ENCODE measurements at regions of chr14 and their contacts with region 1.

Region 1: DNA sequence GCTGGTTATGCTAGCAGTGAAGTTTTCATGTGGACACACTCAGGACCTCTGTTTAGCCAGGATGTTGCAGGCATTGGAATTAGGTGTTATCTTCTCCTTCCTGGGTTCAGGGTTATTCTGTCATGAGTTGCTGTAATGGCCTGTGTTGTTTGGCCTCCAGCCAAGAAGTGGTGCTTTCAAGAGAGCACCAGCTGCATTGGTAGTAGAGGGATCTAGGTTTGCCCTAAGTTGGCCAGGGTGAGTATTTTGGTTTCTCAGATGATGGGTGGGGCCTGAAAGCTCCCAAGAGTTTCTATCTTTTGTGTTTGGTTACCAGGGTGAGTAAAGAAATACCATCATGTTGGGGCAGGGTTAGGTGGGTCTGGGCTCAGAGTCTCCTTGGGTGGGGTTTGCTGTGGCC is 2.7 kb upstream of the GZMH start:
- DNase-seq: peak; percentile 87
- H3K4me3 ChIP-seq: no peak overlapping the region
- H3K27ac ChIP-seq: peak overlapping the region; percentile 89
- H3K4me1 ChIP-seq: peaks cover 30% of the 10 kb centered on the region
- H3K27me3 ChIP-seq: no peaks in the 10 kb centered on the region
- CTCF ChIP-seq: no peak

Region 2: DNA sequence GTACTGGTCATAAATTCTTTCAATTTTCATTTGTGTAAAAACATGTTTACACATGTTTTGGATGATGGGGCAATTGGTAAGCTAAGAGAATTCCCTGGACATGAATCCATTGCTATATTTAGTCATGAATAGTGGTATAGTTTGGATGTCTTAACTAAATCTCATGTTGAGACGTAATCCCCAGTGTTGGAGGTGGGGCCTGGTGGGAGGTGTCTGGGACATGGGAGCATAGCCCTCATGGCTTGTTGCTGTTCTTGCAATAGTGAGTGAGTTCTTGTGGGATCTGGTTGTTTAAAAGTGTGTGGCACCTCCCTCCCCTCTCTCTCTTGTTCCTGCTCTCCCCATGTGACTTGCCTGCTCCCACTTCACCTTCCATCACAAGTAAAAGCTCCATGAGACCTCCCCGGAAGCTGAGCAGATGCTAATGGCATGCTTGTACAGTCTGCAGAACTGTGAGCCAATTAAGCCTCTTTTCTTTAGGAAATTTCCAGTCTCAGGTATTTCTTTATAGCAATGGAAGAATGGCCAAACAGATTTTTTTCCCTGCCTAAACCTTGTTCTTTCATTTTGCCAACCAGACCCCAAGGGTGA is 69.8 kb before region 1 on chr14:
- CTCF ChIA-PET with region 1: no interaction called
- dilution Hi-C with region 1: no loop called
- in situ Hi-C with region 1: no loop called
- intact Hi-C with region 1: no loop called
- DNase-seq: peak; percentile 93
- H3K4me3 ChIP-seq: no peak overlapping the region
- H3K27ac ChIP-seq: peak overlapping the region; percentile 92
- H3K4me1 ChIP-seq: peaks cover 13% of the 10 kb centered on the region
- H3K27me3 ChIP-seq: no peaks in the 10 kb centered on the region
- CTCF ChIP-seq: no peak

Region 3: GRCh38 chr14:24662753-24663152 is 50.6 kb after region 1 on chr14:
- CTCF ChIA-PET with region 1: no interaction called
- dilution Hi-C with region 1: loop called (anchors 5 kb)
- in situ Hi-C with region 1: no loop called
- intact Hi-C with region 1: loop called (anchors 5 kb)
- DNase-seq: no peak
- H3K4me3 ChIP-seq: no peak overlapping the region
- H3K27ac ChIP-seq: no peak overlapping the region
- H3K4me1 ChIP-seq: peaks cover 43% of the 10 kb centered on the region
- H3K27me3 ChIP-seq: no peaks in the 10 kb centered on the region
- CTCF ChIP-seq: no peak

Measured in mammary epithelial cell (primary cell).